ENCODE measurements at regions of chr6 and their contacts with region 1.

Region 1: GRCh38 chr6:39228992-39229767 is at the start of gene KCNK5:
- DNase-seq: peak; percentile 88
- ATAC-seq: peak; percentile 91
- total RNA-seq, gene KCNK5: 15.6 TPM

Region 2: DNA sequence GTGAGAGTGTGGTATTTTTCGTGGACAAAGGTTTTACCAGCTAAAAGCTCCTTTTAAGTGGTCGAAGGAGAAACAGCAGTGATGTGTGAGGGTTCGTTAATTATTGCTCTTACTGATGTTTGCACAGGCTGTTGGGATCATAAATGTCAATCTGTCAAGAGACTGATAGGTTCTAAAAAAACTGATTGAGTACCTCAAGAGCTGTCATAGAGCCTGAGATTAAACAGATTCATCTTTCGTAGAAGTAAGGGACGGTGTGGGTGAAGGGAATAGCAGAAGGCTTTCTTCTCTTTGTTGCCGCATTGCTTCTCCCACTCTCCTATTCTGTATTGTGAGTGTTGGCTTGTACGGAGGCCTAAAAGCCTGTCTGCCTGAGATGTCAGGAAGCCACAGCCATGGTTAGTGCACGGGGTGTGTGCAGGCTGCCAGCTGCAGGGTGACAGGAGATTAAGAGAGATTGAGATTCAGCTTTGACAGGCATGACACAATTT is 1118.7 kb before region 1 on chr6:
- intact Hi-C with region 1: no loop called
- DNase-seq: no peak
- ATAC-seq: no peak

Region 3: DNA sequence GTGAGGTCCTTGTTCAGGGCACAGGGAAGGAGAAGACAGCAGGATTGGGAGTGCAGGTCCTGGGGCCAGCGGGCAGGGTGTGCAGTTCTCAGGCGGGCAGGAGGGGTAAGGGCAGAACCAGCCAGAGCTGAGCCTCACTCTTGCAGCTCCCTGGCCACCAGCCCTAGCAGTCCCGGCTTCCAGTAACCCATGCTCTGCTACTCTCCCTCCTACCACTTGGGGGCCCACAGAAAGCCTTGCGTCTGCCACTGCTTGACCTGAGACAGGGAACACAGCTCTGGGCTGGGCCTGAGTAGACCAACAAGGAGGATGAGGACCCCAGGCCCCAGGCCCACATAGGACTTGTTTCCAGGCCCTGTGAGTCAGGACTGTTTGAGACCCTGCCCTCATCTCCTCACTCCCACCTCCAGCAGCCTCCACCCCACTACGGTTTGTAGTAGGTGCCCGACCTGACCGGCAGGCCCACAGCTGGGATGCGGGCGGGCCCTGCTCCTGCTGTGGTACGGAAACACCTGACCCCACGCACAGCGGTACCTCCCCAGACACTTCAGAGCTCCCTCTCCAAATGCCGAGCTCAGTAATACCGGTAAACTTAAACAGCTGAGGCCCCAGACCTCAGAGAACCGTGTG is 39.1 kb before region 1 on chr6:
- intact Hi-C with region 1: loop called (anchors 5 kb)
- DNase-seq: peak; percentile 74
- ATAC-seq: peak; percentile 79

Measured in sciatic nerve (tissue), 2 donors.